Dorsolateral prefrontal cortex (tissue), 120 donors: ENCODE measurements at regions of chr7 and their contacts with region 1.

Region 1: GRCh38 chr7:29574659-29575058 is 11.0 kb downstream of the PRR15 start:
- DNase-seq: no peak
- H3K4me3 ChIP-seq: no peak overlapping the region
- H3K27ac ChIP-seq: no peak overlapping the region
- H3K27me3 ChIP-seq: no peaks in the 10 kb centered on the region
- CTCF ChIP-seq: no peak

Region 2: GRCh38 chr7:29538389-29538788 is 36.3 kb before region 1 on chr7:
- intact Hi-C with region 1: no loop called
- DNase-seq: no peak
- H3K4me3 ChIP-seq: no peak overlapping the region
- H3K27ac ChIP-seq: no peak overlapping the region
- H3K27me3 ChIP-seq: no peaks in the 10 kb centered on the region
- CTCF ChIP-seq: no peak

Region 3: DNA sequence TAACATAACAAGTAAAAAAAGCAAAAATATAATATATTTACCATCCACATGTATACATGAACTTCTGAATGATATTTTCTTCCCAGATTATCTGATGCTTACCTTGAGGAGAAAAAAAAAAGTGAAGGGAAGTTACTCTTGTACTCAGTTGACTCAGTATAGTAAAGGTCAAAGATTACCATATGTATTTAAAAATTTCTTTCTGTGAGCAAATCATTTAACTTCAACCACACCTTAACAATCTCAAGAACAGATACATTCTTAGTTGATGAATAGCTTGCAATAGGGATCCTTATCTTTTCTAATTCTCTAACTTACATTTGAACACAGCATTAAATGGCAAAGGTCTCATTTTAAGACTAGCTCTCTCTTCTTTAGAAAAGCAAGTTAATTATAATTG is 18.8 kb after region 1 on chr7:
- intact Hi-C with region 1: loop called in 1 of 2 experiments (anchors 2 kb)
- DNase-seq: no peak
- H3K4me3 ChIP-seq: no peak overlapping the region
- H3K27ac ChIP-seq: no peak overlapping the region
- H3K27me3 ChIP-seq: no peaks in the 10 kb centered on the region
- CTCF ChIP-seq: no peak

Region 4: DNA sequence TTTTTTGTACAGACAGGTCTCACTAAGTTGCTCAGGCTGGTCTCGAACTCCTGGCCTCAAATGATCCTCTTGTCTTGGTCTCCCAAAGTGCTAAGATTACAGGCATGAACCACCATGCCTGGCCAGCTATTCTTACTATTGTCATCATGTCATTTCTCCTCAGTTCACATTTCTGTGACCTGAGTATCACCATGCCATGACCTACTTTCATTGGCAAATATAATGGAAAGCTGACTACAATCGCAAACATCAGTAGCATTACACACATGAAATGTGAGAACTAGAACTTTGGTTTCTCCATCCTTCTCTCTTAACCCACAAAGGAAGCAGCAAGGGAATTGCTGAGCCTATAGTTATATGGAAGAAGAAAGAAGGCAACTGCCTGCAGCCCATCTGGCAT is 205.7 kb after region 1 on chr7:
- intact Hi-C with region 1: no loop called
- DNase-seq: no peak
- H3K4me3 ChIP-seq: no peak overlapping the region
- H3K27ac ChIP-seq: no peak overlapping the region
- H3K27me3 ChIP-seq: peaks cover 0 to 6% (median 0%) of the 10 kb centered on the region in 45 donors
- CTCF ChIP-seq: no peak